Common myeloid progenitor, CD34-positive (primary cell): ENCODE measurements at regions of chr1 and their contacts with region 1.

Region 1: GRCh38 chr1:167442124-167442848 is 76.0 kb downstream of the CD247 start:
- DNase-seq: peak; percentile 80 to 89 (median 87)
- H3K4me3 ChIP-seq: no peak overlapping the region
- H3K27ac ChIP-seq: no peak overlapping the region
- H3K4me1 ChIP-seq: peaks cover 5 to 24% (median 19%) of the 10 kb centered on the region in 4 experiments
- H3K27me3 ChIP-seq: peaks cover 0 to 10% (median 0%) of the 10 kb centered on the region in 5 experiments

Region 2: GRCh38 chr1:167401260-167401873 is 40.9 kb before region 1 on chr1:
- CTCF ChIA-PET with region 1: interaction called, 25 read pairs
- POLR2A ChIA-PET with region 1: no interaction called
- DNase-seq: peak; percentile 51 to 73 (median 69)
- H3K4me3 ChIP-seq: no peak overlapping the region
- H3K27ac ChIP-seq: no peak overlapping the region
- H3K4me1 ChIP-seq: no peaks in the 10 kb centered on the region
- H3K27me3 ChIP-seq: no peaks in the 10 kb centered on the region

Region 3: DNA sequence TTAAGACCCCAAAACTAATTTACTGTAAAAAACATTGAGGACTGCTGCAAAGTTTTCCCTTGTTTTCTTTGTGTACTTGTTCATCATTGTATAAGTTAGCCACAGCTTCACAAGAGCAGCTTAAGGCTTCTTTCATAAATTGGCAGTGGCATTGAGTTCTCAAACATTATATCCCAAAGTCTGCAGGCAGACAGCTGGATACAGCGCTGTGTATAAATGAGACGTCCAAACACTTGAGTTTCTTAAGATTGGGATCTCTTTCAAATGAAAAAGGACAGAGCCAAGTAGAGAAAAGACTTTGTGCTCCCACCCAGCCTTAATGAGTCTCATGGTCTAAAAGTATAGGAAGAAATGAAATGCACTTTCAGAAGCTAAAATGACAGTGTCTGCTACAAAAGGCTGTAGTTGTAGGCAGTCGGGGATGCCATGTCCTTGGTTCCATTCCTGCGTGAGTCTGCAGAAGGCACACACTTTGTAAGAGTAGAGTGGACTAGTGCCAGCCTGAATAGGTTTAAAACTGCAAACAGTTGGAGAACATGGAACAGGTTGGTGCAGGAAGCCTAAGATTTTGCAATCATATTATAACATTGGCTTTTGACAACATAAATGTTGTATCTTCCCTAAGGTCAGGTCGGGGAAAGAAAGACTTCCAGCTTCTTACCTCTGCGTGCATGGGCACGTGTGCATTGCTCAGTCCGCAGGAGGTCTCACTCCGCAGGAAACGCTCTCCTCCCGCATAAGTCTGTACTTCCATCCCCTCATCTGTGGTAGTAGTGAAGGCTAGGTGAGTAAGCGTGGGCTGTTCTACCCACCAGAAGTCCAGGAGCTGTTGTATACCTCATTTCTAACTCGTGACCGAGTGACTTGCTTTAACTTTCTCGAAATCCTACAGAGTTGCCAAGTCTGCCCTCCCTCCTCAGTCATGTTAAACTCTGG is 18.3 kb before region 1 on chr1:
- CTCF ChIA-PET with region 1: interaction called, 14 read pairs
- POLR2A ChIA-PET with region 1: no interaction called
- DNase-seq: no peak
- H3K4me3 ChIP-seq: no peak overlapping the region
- H3K27ac ChIP-seq: no peak overlapping the region
- H3K4me1 ChIP-seq: peaks cover 0 to 4% (median 1%) of the 10 kb centered on the region in 4 experiments
- H3K27me3 ChIP-seq: no peaks in the 10 kb centered on the region

Region 4: DNA sequence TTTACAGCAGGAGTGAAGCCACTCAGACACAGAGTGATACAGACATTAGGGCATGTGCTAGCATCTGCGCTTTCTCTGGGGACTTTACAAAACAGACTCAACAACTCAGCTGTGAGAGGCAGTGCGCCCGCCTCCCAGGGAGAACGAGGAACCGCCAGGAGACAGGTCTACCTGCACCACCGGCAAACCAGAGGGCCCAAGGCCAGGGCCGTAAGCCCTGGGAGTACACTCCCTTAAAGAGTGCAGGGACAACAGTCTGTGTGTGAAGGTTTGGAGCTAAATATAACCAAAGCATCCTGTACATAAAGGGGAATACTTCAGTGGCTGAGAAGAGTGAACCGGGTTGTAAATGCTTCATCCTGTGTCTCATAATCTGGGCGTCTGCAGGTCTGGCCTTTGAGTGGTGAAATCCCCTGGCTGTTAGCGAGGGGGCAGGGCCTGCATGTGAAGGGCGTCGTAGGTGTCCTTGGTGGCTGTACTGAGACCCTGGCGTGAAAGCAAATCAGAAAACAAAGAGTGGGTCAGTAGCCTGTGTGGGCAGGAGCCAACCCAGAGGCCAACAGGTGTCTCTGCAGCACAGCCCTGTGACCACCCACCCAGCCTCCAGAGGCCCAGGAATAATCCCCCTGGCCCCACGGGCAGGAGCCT is 10.9 kb before region 1 on chr1:
- CTCF ChIA-PET with region 1: interaction called, 20 read pairs
- POLR2A ChIA-PET with region 1: no interaction called
- DNase-seq: no peak
- H3K4me3 ChIP-seq: no peak overlapping the region
- H3K27ac ChIP-seq: no peak overlapping the region
- H3K4me1 ChIP-seq: no peaks in the 10 kb centered on the region
- H3K27me3 ChIP-seq: no peaks in the 10 kb centered on the region

Region 5: GRCh38 chr1:167454894-167455785 is 12.9 kb after region 1 on chr1:
- CTCF ChIA-PET with region 1: interaction called, 28 read pairs
- POLR2A ChIA-PET with region 1: interaction called, 5 read pairs
- DNase-seq: peak; percentile 82 to 94 (median 91)
- H3K4me3 ChIP-seq: peak overlapping the region; percentile 58 to 92 (median 78)
- H3K27ac ChIP-seq: peak overlapping the region; percentile 61 to 82
- H3K4me1 ChIP-seq: peaks cover 3 to 29% (median 17%) of the 10 kb centered on the region in 4 experiments
- H3K27me3 ChIP-seq: no peaks in the 10 kb centered on the region